H1 (cell line): ENCODE measurements at regions of chr2 and their contacts with region 1.

Region 1: DNA sequence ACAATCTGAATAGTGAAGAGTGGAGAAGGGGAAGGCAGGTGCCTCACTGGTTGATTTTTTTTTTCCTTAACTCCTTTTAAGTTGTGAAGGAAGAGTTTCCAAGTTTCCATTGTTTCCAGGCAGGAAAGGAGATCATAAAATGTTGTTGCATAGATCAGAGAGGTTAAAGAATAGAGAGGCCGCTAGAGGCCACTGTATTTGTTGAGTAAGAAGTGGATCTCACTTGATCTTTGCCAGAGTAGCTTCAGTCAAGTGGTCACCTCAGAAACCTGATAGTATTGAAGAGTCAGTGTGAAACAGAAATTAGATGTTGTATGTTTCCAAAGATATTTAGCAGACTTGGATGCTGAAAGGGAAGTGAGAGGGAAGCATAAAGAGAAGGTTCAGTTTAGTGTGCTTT is 17.6 kb downstream of the CTNNA2 start:
- DNase-seq: no peak
- H3K4me3 ChIP-seq: no peak overlapping the region
- H3K27ac ChIP-seq: no peak overlapping the region
- H3K4me1 ChIP-seq: no peaks in the 10 kb centered on the region
- H3K27me3 ChIP-seq: no peaks in the 10 kb centered on the region
- CTCF ChIP-seq: peak in 2 of 3 experiments; percentile 36 to 48; a peak in 2 of 4 replicates
- EP300 ChIP-seq: no peak
- POLR2A ChIP-seq: no peak
- RAD21 ChIP-seq: peak in 1 of 2 experiments; percentile 58; a peak in 2 of 4 replicates

Region 2: GRCh38 chr2:79513711-79514110 is 16.7 kb before region 1 on chr2:
- CTCF ChIA-PET with region 1: interaction called, 10 read pairs
- POLR2A ChIA-PET with region 1: no interaction called
- DNase-seq: no peak
- H3K4me3 ChIP-seq: peak overlapping the region; percentile 64 to 89 (median 72)
- H3K27ac ChIP-seq: no peak overlapping the region
- H3K4me1 ChIP-seq: peaks cover 2 to 17% (median 9%) of the 10 kb centered on the region in 4 experiments; a peak in 6 of 7 replicates
- H3K27me3 ChIP-seq: peaks cover 0 to 2% (median under 1%) of the 10 kb centered on the region in 4 experiments; a peak in 2 of 7 replicates
- CTCF ChIP-seq: no peak
- EP300 ChIP-seq: no peak
- POLR2A ChIP-seq: no peak
- RAD21 ChIP-seq: no peak

Region 3: GRCh38 chr2:79554899-79555298 is 24.5 kb after region 1 on chr2:
- CTCF ChIA-PET with region 1: interaction called, 12 read pairs
- POLR2A ChIA-PET with region 1: no interaction called
- DNase-seq: no peak
- H3K4me3 ChIP-seq: no peak overlapping the region
- H3K27ac ChIP-seq: no peak overlapping the region
- H3K4me1 ChIP-seq: peaks cover 0 to 4% (median 0%) of the 10 kb centered on the region in 4 experiments; a peak in 1 of 7 replicates
- H3K27me3 ChIP-seq: no peaks in the 10 kb centered on the region
- CTCF ChIP-seq: no peak
- EP300 ChIP-seq: no peak
- POLR2A ChIP-seq: no peak
- RAD21 ChIP-seq: no peak